ENCODE measurements at regions of chr5 and their contacts with region 1.

Region 1: GRCh38 chr5:155147222-155147621 is 133.7 kb downstream of the KIF4B start:
- DNase-seq: no peak
- ATAC-seq: no peak
- H3K4me3 ChIP-seq: no peak overlapping the region
- H3K27ac ChIP-seq: no peak overlapping the region
- H3K4me1 ChIP-seq: no peaks in the 10 kb centered on the region
- H3K27me3 ChIP-seq: no peaks in the 10 kb centered on the region; a peak in 1 of 5 replicates
- CTCF ChIP-seq: 0 out of 2 replicates have a peak, but pooled peaks have one; percentile 17
- EP300 ChIP-seq: no peak
- POLR2A ChIP-seq: no peak
- RAD21 ChIP-seq: no peak

Region 2: DNA sequence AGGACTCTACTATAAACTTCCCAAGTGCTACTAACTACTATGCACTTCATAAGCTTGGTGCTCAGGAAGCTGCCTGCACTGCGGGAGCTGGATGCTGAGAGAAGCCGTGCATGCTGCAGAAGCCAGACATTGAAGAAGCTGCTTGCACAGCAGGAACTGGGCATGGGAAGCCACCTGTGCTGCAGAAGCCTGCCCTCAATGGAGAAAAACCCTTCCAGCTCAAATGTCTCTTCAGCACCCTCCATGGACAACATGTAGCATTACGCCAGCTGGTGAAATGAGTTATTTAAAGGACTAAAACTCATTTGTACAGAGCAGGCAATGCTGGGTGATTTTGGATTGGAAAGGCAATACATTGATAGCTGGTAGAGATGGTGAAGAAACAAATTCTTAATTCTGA is 113.6 kb after region 1 on chr5:
- CTCF ChIA-PET with region 1: no interaction called
- POLR2A ChIA-PET with region 1: no interaction called
- in situ Hi-C with region 1: no loop called
- intact Hi-C with region 1: loop called (anchors 10 kb)
- DNase-seq: peak; percentile 16
- ATAC-seq: peak; percentile 86
- H3K4me3 ChIP-seq: no peak overlapping the region
- H3K27ac ChIP-seq: no peak overlapping the region
- H3K4me1 ChIP-seq: no peaks in the 10 kb centered on the region
- H3K27me3 ChIP-seq: no peaks in the 10 kb centered on the region
- CTCF ChIP-seq: peak; percentile 31
- EP300 ChIP-seq: no peak
- POLR2A ChIP-seq: no peak
- RAD21 ChIP-seq: no peak